ENCODE measurements at regions of chrX and their contacts with region 1.

Region 1: DNA sequence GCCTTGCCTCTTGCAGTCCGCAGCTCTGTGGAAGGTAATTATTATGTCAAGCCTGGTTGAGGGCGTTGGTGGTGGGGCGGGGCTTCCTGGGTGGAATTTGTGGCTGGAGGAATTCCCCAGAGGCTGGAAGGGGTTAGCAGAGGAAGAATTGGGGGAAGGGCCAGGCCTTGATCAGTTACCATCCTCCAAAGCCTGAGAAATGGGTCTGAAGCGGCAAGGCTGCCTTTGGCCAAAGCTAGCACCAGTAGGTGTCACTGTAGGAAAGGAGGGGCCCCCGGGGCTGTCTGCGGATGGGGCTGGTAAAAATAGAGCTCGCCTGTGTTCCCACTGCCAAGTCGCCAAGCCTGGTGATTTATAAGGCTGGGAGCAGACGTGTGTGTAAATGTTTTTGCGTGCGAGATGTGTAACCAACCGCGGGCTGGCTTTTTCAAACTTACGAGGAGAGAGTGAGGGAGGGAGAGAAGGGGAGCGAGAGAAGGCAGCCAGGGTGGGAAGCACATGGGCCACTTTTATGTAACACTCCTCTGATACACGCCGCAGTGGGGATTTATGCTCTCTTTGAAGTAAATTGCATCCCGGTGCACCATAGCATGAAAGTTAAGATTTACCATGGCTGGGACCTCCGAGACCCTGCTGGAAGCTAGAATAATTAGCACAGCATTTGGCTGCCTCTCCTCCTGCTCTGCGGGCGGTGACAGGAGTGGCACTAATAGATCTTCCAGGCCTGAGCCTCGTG is 366.9 kb downstream of the BCOR start:
- DNase-seq: peak; percentile 60
- H3K4me3 ChIP-seq: peak overlapping the region in 1 of 4 experiments; percentile 37; a peak in 1 of 8 replicates
- H3K27ac ChIP-seq: no peak overlapping the region
- H3K4me1 ChIP-seq: peaks cover 0 to 16% (median 12%) of the 10 kb centered on the region in 4 experiments; a peak in 4 of 7 replicates
- H3K27me3 ChIP-seq: no peaks in the 10 kb centered on the region
- CTCF ChIP-seq: peak; percentile 42 to 54 (median 53)
- EP300 ChIP-seq: no peak
- POLR2A ChIP-seq: no peak
- RAD21 ChIP-seq: peak; percentile 65 to 79

Region 2: GRCh38 chrX:39705299-39705698 is 25.5 kb before region 1 on chrX:
- CTCF ChIA-PET with region 1: no interaction called
- POLR2A ChIA-PET with region 1: no interaction called
- DNase-seq: no peak
- H3K4me3 ChIP-seq: no peak overlapping the region
- H3K27ac ChIP-seq: no peak overlapping the region
- H3K4me1 ChIP-seq: no peaks in the 10 kb centered on the region
- H3K27me3 ChIP-seq: no peaks in the 10 kb centered on the region
- CTCF ChIP-seq: peak; percentile 7 to 43 (median 32); a peak in 2 of 4 replicates
- EP300 ChIP-seq: no peak
- POLR2A ChIP-seq: no peak
- RAD21 ChIP-seq: peak; percentile 25 to 28; a peak in 2 of 4 replicates

Region 3: GRCh38 chrX:39814391-39814790 is 83.6 kb after region 1 on chrX:
- CTCF ChIA-PET with region 1: interaction called, 11 read pairs
- POLR2A ChIA-PET with region 1: no interaction called
- DNase-seq: no peak
- H3K4me3 ChIP-seq: no peak overlapping the region
- H3K27ac ChIP-seq: no peak overlapping the region
- H3K4me1 ChIP-seq: peaks cover 7 to 29% (median 23%) of the 10 kb centered on the region in 4 experiments
- H3K27me3 ChIP-seq: peaks cover 0 to 1% (median 0%) of the 10 kb centered on the region in 4 experiments; a peak in 1 of 7 replicates
- CTCF ChIP-seq: peak in 2 of 3 experiments; percentile 30 to 46; a peak in 2 of 4 replicates
- EP300 ChIP-seq: no peak
- POLR2A ChIP-seq: no peak
- RAD21 ChIP-seq: peak; percentile 63 to 74

Region 4: DNA sequence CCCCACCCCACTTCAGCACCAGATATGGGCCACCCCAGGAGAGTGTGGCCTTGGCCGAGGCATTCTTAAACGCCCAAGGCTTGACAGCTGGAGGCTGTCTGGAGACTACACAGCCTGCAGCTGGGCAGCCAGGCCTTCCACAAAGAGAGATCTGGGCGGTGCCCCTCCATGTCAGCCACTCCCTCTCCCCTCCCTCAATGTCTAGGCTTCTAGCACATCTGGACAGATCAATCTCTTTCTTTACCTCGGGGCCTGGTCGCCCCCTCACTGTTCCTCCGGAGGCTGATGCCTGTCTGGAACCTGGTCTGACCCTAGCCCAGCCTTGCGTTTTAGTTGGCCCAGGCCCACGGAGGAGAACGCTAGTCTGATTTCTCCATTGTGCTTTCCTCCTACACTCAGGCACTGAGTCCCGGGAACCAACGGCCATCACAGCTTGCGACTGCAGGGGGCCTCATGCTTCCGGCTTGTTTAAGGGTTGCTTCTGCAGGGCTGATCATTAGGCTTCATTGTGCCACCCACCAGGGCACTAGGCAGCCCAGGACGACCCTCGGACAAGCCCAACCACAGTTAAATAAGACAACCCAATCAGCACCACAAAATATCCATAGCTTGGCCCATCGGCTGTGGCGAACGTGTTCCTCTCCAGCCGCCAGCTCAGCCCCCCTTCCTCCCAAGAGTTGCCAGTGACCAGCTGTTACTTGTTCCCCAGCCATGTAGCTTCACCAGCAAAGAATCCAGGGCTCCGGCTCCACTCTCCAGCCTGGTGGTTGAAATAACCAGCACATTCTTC is 166.3 kb after region 1 on chrX:
- CTCF ChIA-PET with region 1: no interaction called
- POLR2A ChIA-PET with region 1: no interaction called
- DNase-seq: peak in 1 of 2 experiments; percentile 52
- H3K4me3 ChIP-seq: no peak overlapping the region
- H3K27ac ChIP-seq: peak overlapping the region; percentile 3; the same call in 1 of the 2 replicates
- H3K4me1 ChIP-seq: peaks cover 7 to 23% (median 11%) of the 10 kb centered on the region in 4 experiments
- H3K27me3 ChIP-seq: no peaks in the 10 kb centered on the region
- CTCF ChIP-seq: no peak
- EP300 ChIP-seq: no peak
- POLR2A ChIP-seq: no peak
- RAD21 ChIP-seq: peak in 1 of 2 experiments; percentile 19; a peak in 1 of 4 replicates